SK-N-SH (cell line): ENCODE measurements at regions of chr19 and their contacts with region 1.

Region 1: GRCh38 chr19:35352448-35353304 is 5.0 kb downstream of the FFAR1 start:
- DNase-seq: peak; percentile 85
- H3K4me3 ChIP-seq: no peak overlapping the region
- H3K27ac ChIP-seq: no peak overlapping the region
- H3K4me1 ChIP-seq: peaks cover 0 to 3% of the 10 kb centered on the region in 2 experiments; a peak in 1 of 4 replicates
- H3K27me3 ChIP-seq: peaks cover 80% of the 10 kb centered on the region
- CTCF ChIP-seq: peak; percentile 80
- EP300 ChIP-seq: no peak
- RAD21 ChIP-seq: peak; percentile 91

Region 2: DNA sequence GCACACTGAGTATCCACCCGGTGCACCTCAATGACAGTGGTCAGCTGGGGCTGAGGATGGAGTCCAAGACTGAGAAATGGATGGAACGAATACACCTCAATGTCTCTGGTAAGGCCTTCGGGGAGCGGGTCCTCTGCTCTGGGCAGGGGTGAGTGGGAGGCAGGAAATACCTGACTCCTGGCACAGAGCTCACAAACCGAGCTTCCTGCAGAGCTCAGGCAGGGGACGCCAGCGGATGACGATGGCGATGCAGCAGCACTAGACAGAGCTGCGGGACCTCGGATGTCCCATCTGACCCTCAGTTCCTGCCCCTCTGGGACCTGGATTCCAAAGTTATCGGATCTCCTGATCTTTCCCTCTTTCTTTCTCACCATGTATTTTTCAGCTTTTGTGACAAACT is 19.9 kb before region 1 on chr19:
- CTCF ChIA-PET with region 1: interaction called, 20 read pairs
- POLR2A ChIA-PET with region 1: no interaction called
- DNase-seq: no peak
- H3K4me3 ChIP-seq: no peak overlapping the region
- H3K27ac ChIP-seq: no peak overlapping the region
- H3K4me1 ChIP-seq: no peaks in the 10 kb centered on the region
- H3K27me3 ChIP-seq: peaks cover 91% of the 10 kb centered on the region
- CTCF ChIP-seq: no peak
- EP300 ChIP-seq: no peak
- RAD21 ChIP-seq: no peak

Region 3: DNA sequence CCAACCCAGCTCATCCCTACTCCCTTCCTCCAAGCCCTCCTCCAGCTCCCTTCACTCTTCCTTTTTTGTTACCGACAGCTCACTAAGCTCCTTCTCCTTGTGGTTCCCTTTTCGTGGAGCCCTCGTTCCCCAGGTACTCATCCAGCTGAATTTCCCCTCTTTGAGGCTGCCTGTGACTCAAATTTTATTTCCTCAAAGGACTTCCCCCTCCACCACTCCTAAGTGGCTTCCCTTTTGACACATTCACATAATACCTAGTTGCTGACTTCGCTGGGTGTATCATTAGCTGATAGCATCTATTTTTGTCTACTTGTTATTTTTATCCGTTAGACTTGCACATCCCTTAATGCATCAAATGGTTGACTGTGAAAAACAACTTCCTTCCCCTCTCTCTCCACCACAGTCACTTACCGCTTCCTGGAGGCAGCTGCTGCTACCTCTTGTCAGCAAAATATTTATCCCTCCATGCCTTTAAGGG is 109.8 kb after region 1 on chr19:
- CTCF ChIA-PET with region 1: interaction called, 47 read pairs
- POLR2A ChIA-PET with region 1: no interaction called
- DNase-seq: no peak
- H3K4me3 ChIP-seq: no peak overlapping the region
- H3K27ac ChIP-seq: no peak overlapping the region
- H3K4me1 ChIP-seq: peaks cover 0 to 5% of the 10 kb centered on the region in 2 experiments; a peak in 1 of 4 replicates
- H3K27me3 ChIP-seq: peaks cover 40% of the 10 kb centered on the region
- CTCF ChIP-seq: no peak
- EP300 ChIP-seq: no peak
- RAD21 ChIP-seq: no peak

Region 4: DNA sequence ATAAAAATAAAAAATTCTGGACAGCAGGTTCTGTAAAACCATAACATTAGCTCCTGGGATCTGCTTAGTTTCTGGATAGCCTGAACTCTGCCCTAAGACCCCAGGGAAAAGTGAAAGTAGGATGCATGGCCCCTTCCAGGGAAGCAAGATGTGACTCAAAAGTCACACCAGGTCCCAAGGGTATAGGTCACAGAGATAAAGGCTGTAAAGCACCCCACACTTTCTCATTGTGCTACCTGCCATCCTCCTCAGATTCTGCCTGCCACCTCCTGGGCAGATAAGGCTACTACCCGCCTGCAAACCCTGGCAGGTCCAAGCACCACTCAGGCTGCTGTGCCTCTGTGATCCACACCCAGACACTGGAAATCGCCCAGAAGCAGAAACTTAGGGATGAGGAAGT is 116.0 kb after region 1 on chr19:
- CTCF ChIA-PET with region 1: interaction called, 47 read pairs
- POLR2A ChIA-PET with region 1: no interaction called
- DNase-seq: peak; percentile 45
- H3K4me3 ChIP-seq: no peak overlapping the region
- H3K27ac ChIP-seq: no peak overlapping the region
- H3K4me1 ChIP-seq: no peaks in the 10 kb centered on the region
- H3K27me3 ChIP-seq: peaks cover 70% of the 10 kb centered on the region
- CTCF ChIP-seq: peak; percentile 55
- EP300 ChIP-seq: no peak
- RAD21 ChIP-seq: peak; percentile 56

Region 5: DNA sequence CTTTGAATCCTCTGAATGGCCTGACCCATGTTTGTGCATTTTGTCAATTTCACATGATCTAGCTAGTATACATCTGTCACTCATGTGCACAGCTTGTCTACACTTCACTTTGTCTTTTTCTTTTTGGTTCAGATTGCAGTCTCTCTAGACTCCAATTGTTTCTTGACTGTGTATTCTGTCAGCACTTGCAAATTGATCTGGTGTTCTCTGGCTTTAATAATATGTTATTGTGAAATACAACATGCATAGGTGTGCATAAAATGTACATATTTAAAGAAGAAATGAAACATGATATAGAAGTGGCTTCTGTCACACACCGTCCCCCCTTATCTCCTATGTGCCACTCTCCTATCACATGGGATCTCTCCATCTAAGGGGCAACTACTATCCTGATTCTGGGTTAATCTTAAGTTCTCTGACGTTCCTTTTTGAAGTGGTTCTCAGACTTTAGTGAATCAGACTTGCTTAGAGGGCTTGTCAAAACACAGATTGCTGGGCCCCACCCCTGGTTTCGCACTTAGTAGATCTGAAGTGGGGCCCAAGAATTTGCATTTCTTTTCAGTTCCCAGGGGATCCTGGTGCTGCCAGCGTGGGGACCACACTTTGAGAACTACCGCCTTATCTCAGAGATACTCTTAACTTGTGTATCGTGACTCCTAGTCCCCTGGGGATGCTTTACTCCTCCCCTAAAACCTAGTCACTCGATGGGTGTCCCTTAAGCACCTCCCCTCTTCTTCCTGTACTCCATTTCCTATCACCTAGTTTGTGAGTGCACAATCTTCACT is 131.8 kb after region 1 on chr19:
- CTCF ChIA-PET with region 1: interaction called, 11 read pairs
- POLR2A ChIA-PET with region 1: no interaction called
- DNase-seq: no peak
- H3K4me3 ChIP-seq: no peak overlapping the region
- H3K27ac ChIP-seq: no peak overlapping the region
- H3K4me1 ChIP-seq: no peaks in the 10 kb centered on the region; a peak in 1 of 4 replicates
- H3K27me3 ChIP-seq: peaks cover 59% of the 10 kb centered on the region
- CTCF ChIP-seq: no peak
- EP300 ChIP-seq: no peak
- RAD21 ChIP-seq: no peak

Region 6: GRCh38 chr19:35495107-35496064 is 142.7 kb after region 1 on chr19:
- CTCF ChIA-PET with region 1: interaction called, 111 read pairs
- POLR2A ChIA-PET with region 1: no interaction called
- DNase-seq: peak; percentile 87
- H3K4me3 ChIP-seq: no peak overlapping the region
- H3K27ac ChIP-seq: no peak overlapping the region
- H3K4me1 ChIP-seq: peaks cover 0 to 2% of the 10 kb centered on the region in 2 experiments; a peak in 1 of 4 replicates
- H3K27me3 ChIP-seq: peaks cover 89% of the 10 kb centered on the region
- CTCF ChIP-seq: peak; percentile 81
- EP300 ChIP-seq: no peak
- RAD21 ChIP-seq: peak; percentile 67